ENCODE measurements at regions of chr15 and their contacts with region 1.

Region 1: GRCh38 chr15:76973362-76973743 is 21.6 kb upstream of the PSTPIP1 start:
- DNase-seq: peak; percentile 72
- H3K4me3 Mint-ChIP-seq: no peak overlapping the region
- H3K27ac Mint-ChIP-seq: no peak overlapping the region
- H3K4me1 Mint-ChIP-seq: peaks cover 31% of the 10 kb centered on the region
- H3K27me3 Mint-ChIP-seq: peaks cover 13% of the 10 kb centered on the region

Region 2: GRCh38 chr15:76840830-76841460 is 132.4 kb before region 1 on chr15:
- CTCF ChIA-PET with region 1: no interaction called
- POLR2A ChIA-PET with region 1: no interaction called
- DNase-seq: peak; percentile 8
- H3K4me3 Mint-ChIP-seq: no peak overlapping the region
- H3K27ac Mint-ChIP-seq: no peak overlapping the region
- H3K4me1 Mint-ChIP-seq: peaks cover 2% of the 10 kb centered on the region
- H3K27me3 Mint-ChIP-seq: no peaks in the 10 kb centered on the region

Region 3: DNA sequence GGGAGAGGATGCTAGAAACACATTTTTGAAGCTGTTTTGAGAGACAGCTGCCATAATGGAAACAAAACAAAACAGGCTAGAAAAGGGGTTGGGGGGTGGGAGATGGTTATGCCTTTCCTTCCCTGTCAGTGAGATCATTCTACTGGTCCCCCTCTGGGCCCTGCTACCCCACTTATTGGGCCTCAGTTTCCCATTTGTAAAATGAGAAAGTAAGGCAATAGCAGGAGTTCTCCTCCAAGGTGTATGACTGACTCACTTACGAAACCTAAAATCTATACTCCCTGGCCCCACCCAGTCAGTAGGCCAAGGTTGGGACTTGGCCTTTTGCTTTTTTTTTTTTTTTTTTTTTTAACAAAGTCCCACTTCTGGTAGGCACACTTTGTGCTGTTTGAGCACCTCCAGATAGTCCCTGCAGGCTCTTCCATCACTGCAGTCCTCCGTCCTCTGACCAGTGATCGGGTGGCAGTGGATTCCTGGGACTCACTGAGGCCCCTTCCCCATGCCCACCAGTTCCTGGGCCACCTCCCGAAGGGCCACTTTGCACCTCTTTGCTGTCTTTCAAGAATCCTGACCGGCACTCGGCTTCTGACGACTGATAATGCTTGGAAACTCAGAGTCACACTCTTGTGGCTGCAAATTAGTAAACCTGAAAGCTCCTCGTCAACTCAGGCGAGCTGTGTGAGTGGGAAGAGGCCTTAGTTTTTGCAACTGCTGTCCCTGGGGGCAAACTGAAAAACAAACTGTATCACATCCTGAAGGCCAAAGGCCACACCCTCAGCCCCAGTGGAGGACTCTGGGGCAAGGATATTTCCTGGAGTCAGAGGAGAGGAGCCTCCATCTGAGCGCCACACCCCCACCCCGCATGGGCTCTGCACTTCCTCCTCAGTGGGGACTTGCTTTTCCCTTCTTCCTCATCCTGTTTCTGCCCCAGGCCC is 14.8 kb after region 1 on chr15:
- CTCF ChIA-PET with region 1: interaction called, 22 read pairs
- POLR2A ChIA-PET with region 1: no interaction called
- DNase-seq: peak; percentile 65
- H3K4me3 Mint-ChIP-seq: peak overlapping the region; percentile 41
- H3K27ac Mint-ChIP-seq: peak overlapping the region; percentile 91
- H3K4me1 Mint-ChIP-seq: peaks cover 69% of the 10 kb centered on the region
- H3K27me3 Mint-ChIP-seq: no peaks in the 10 kb centered on the region

Region 4: GRCh38 chr15:77013776-77014131 is 40.4 kb after region 1 on chr15:
- CTCF ChIA-PET with region 1: interaction called, 18 read pairs
- POLR2A ChIA-PET with region 1: no interaction called
- DNase-seq: peak; percentile 86
- H3K4me3 Mint-ChIP-seq: peak overlapping the region; percentile 61
- H3K27ac Mint-ChIP-seq: peak overlapping the region; percentile 93
- H3K4me1 Mint-ChIP-seq: peaks cover 90% of the 10 kb centered on the region
- H3K27me3 Mint-ChIP-seq: no peaks in the 10 kb centered on the region

Region 5: DNA sequence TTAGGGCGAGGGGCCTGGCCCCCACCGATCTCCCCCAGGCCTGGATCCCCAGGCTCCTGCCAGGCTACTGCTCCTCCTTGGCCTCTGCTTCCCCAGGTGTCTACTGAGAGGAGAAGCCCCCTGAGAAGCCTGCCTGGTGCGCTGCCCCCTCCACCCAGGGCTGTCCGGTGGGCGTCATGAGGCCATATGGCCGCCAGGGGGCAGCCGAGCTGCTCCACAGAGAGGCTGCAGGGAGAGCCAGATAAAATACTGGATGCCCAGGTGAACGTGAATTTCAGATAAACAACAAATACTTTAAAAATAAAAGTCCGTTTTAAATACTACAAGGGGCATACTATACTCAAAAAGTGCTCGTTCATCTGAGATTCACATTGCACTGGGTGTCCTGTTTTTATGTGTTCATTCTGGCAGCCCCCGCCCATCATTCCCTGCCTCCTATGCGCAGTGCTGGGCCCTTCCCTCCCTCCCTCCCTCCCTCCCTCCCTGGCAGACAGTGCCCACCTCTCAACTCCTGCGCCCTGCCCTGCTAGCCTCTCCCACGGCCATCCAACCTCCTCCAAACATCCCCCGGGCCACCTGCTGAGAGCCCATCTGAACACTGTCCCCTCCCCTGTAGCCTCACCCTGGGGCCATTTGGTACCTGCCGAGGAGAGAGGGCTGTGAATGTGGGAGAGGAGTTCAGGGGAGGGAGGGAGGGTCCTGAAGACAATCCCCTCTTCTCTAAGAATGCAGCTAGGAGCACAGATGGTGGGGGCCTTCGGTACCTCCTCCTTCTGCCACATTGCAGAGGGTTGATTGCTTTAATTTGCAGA is 51.1 kb after region 1 on chr15:
- CTCF ChIA-PET with region 1: interaction called, 16 read pairs
- POLR2A ChIA-PET with region 1: interaction called, 3 read pairs
- DNase-seq: peak; percentile 63
- H3K4me3 Mint-ChIP-seq: no peak overlapping the region
- H3K27ac Mint-ChIP-seq: peak overlapping the region; percentile 80
- H3K4me1 Mint-ChIP-seq: peaks cover 53% of the 10 kb centered on the region
- H3K27me3 Mint-ChIP-seq: no peaks in the 10 kb centered on the region